GM23248 (cell line): ENCODE measurements at regions of chr13 and their contacts with region 1.

Region 1: DNA sequence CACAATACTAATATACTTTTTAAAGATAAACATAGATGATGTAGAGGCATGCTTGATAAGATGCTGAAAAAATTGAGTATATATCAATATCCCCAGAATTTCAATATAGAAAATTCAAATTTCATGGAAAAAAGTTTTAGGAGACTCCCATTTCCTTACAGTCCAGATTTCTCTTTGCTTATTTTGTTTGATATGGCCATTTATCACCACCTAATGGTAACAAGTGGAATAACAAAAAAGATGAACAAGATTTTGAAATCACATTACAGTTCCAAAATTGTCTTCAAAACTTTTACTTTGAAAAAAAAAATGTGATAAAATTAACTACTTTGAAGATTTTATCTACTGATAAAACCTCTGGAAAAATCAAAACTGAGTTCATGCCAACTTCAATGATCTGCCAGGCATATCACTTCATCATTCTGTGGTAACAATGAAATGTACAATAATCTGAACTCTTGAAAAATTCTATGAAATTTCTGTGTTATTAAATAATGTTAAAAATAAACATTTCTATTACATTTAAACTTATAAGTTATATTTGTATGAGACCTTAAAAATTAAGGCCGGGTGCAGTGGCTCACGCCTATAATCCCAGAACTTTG is 17.5 kb downstream of the MIPEP start:
- DNase-seq: peak; percentile 55
- H3K4me3 ChIP-seq: no peak overlapping the region
- H3K27ac ChIP-seq: no peak overlapping the region
- H3K4me1 ChIP-seq: peaks cover 20% of the 10 kb centered on the region
- H3K27me3 ChIP-seq: no peaks in the 10 kb centered on the region

Region 2: DNA sequence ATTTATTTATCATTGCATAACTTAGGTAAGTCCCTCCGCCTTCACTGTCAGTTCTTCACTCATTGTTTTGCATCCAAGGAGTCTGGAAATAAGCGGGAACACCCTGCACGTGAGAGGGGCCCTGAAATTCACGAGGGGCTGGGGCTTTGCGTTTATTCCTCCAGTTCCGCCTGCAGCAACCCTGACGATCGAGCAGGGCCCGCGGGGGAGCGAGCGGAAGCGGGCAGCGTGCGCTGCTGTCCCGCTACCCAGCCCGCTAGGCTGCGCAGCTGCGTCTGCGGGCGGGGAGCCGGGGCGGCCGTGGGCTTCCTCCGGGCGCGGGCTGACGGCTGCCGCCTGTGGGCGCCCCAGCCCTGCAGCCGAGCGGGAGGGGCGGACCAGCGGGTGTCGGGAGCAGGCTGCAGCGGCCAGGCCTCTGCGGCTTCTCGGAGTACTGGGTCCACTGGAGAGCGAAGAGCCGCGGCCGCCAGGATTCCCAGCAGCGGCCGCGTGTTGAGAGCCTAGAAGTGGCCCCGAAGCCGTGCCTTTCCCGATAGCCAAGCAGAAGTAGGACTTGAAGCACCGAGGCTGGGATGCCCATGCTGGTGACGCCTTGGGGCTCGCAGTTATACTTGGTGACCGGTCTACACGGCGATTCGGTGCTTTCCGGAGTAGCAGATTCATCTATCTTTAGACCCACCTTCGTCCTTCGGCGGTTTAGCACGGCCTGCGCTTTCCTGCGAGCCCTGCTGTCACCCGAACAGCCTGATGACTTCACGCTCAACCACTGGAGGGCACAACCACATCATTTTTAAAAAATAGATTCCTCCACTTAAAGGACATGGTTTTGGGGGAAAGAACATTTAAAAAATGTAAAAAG is 405.3 kb before region 1 on chr13:
- in situ Hi-C with region 1: loop called (anchors 10 kb)
- DNase-seq: peak; percentile 90
- H3K4me3 ChIP-seq: peak overlapping the region; percentile 68
- H3K27ac ChIP-seq: peak overlapping the region; percentile 30
- H3K4me1 ChIP-seq: peaks cover 42% of the 10 kb centered on the region
- H3K27me3 ChIP-seq: no peaks in the 10 kb centered on the region

Region 3: GRCh38 chr13:23579072-23579895 is 292.4 kb before region 1 on chr13:
- in situ Hi-C with region 1: loop called (anchors 10 kb)
- DNase-seq: peak; percentile 95
- H3K4me3 ChIP-seq: peak overlapping the region; percentile 75
- H3K27ac ChIP-seq: no peak overlapping the region
- H3K4me1 ChIP-seq: no peaks in the 10 kb centered on the region
- H3K27me3 ChIP-seq: no peaks in the 10 kb centered on the region

Region 4: DNA sequence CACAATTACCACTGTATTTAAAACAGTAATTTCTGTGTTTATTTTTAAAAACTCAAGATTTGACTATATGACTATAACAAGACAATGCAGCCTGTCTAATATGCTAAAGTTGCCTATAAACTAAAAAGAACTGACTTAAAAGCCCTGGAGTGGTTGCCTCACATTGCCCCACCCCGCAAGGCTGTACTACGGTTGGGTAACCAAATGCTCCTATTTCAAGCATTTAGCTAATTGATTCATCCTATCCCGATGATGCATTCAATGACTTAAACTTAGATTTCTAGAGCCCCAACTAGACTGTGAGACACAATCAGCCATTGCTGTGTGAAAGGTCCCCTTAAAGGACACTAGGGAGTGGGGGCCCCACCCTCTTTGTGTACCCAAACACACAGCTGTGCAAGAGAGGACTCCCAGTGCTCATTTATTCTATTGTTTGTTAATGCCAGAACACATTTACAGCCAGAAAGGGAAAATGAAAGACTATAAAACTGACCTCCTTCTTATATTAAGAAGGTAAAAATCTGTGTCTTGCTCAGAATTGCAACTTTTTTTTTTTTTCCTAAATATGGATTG is 49.4 kb before region 1 on chr13:
- in situ Hi-C with region 1: no loop called
- DNase-seq: no peak
- H3K4me3 ChIP-seq: no peak overlapping the region
- H3K27ac ChIP-seq: no peak overlapping the region
- H3K4me1 ChIP-seq: no peaks in the 10 kb centered on the region
- H3K27me3 ChIP-seq: no peaks in the 10 kb centered on the region